CD8-positive, alpha-beta T cell (primary cell): ENCODE measurements at regions of chr12 and their contacts with region 1.

Region 1: DNA sequence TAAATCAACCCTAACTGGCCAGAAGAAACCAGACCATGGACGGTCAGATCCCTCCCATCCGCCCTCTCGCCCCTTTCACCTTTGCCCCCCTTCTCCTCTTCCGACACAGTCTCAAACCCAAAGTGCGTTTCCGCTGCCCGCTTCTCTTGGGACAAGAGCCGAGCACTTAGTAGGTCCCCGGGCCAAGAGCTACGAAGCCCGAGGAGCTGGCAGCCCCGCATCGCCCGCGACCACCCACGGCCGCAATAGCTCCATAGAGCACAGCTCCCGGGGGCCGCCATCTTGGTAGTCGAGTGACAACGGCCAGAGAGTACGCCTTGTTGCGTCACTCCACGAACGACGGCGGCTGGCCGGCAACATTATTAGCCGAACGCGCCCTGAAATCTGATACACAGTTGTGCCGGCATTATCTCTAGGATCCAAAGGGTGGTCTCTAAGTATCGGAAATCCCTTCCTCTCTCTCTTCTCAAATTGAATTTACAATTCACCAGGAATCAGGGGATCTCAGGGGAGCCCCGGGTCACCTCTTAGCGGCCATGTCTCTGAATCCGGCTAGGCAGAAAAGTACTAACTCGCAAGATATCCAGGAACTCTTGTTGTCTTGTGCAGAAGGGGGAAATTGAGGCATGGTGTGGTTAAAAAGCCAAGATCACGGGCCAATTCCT is at the start of gene COQ5:
- DNase-seq: peak; percentile 70 to 90 (median 85)
- ATAC-seq: peak; percentile 96
- H3K4me3 ChIP-seq: peak within 1 kb of the TSS; percentile 63 to 75
- H3K4me3 Mint-ChIP-seq: peak within 1 kb of the TSS; percentile 100
- H3K27ac ChIP-seq: peak within 1 kb of the TSS; percentile 81 to 82
- H3K27ac Mint-ChIP-seq: peak within 1 kb of the TSS; percentile 99
- H3K4me1 ChIP-seq: peaks cover 5% of the 10 kb centered on the region
- H3K4me1 Mint-ChIP-seq: peaks cover 30% of the 10 kb centered on the region
- H3K27me3 ChIP-seq: no peaks in the 10 kb centered on the region
- H3K27me3 Mint-ChIP-seq: no peaks in the 10 kb centered on the region
- CTCF ChIP-seq: no peak
- total RNA-seq, gene COQ5: 7.7 to 9.0 TPM

Region 2: DNA sequence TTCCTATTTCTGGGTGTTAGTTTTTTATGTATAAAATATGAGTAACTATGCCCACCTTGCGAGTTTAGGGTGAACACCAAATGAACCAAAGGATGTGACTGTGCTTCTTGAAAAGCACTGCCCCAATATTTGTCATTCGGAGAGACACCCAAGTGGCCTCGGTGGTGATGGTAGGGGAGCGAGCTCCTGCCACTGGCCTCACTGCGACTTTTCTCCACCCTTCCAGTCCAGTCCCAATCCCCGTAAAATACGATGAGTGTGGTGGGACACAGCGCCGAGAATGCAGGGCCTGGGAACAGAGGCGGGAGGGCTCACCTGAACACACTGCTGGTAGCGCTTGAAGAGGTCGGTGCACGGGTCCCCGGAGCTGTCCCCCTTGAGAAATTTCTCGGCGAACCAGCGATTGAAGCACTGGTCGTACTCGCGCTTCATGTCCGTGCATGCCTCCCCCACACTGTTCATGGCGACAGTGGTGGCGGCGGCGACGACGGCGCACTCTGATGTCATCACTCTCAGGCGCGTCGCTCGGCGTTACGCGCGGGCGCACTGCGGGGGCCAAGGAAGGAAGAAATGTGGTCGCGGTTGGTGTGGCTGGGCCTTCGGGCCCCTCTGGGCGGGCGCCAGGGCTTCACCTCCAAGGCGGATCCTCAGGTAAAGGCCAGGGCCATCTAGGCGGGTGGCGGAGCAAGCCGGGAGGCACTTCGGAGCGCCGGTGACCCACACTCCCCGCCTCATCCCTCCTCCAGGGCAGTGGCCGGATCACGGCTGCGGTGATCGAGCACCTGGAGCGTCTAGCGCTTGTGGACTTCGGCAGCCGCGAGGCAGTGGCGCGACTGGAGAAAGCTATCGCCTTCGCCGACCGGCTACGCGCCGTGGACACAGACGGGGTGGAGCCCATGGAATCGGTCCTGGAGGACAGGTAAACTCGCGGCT is 82.8 kb before region 1 on chr12 and contains the starts of genes GATC and TRIAP1:
- CTCF ChIA-PET with region 1: no interaction called
- POLR2A ChIA-PET with region 1: no interaction called
- intact Hi-C with region 1: loop called in 1 of 2 experiments (anchors 2 kb)
- DNase-seq: peak; percentile 69 to 92 (median 87)
- ATAC-seq: peak; percentile 96
- H3K4me3 ChIP-seq: peak within 1 kb of the TSS; percentile 83 to 98
- H3K4me3 Mint-ChIP-seq: peak within 1 kb of the TSS; percentile 97
- H3K27ac ChIP-seq: peak within 1 kb of the TSS; percentile 89 to 93
- H3K27ac Mint-ChIP-seq: peak within 1 kb of the TSS; percentile 98
- H3K4me1 ChIP-seq: peaks cover 21% of the 10 kb centered on the region
- H3K4me1 Mint-ChIP-seq: peaks cover 32% of the 10 kb centered on the region
- H3K27me3 ChIP-seq: no peaks in the 10 kb centered on the region
- H3K27me3 Mint-ChIP-seq: no peaks in the 10 kb centered on the region
- CTCF ChIP-seq: no peak
- total RNA-seq, gene GATC: 16.6 to 17.3 TPM
- total RNA-seq, gene TRIAP1: 35.8 to 36.0 TPM